Dorsolateral prefrontal cortex (tissue), 120 donors: ENCODE measurements at regions of chr19 and their contacts with region 1.

Region 1: GRCh38 chr19:47745010-47745901 is at the start of gene NOP53:
- DNase-seq: peak; percentile 89 to 97 (median 95)
- H3K4me3 ChIP-seq: peak within 1 kb of the TSS; percentile 64 to 99 (median 85)
- H3K27ac ChIP-seq: peak within 1 kb of the TSS; percentile 81 to 100 (median 98)
- H3K27me3 ChIP-seq: no peaks in the 10 kb centered on the region
- CTCF ChIP-seq: peak in 45 of 56 donors; percentile 6 to 64 (median 38)
- total RNA-seq, gene NOP53: 84.8 to 189 (median 120) TPM

Region 2: DNA sequence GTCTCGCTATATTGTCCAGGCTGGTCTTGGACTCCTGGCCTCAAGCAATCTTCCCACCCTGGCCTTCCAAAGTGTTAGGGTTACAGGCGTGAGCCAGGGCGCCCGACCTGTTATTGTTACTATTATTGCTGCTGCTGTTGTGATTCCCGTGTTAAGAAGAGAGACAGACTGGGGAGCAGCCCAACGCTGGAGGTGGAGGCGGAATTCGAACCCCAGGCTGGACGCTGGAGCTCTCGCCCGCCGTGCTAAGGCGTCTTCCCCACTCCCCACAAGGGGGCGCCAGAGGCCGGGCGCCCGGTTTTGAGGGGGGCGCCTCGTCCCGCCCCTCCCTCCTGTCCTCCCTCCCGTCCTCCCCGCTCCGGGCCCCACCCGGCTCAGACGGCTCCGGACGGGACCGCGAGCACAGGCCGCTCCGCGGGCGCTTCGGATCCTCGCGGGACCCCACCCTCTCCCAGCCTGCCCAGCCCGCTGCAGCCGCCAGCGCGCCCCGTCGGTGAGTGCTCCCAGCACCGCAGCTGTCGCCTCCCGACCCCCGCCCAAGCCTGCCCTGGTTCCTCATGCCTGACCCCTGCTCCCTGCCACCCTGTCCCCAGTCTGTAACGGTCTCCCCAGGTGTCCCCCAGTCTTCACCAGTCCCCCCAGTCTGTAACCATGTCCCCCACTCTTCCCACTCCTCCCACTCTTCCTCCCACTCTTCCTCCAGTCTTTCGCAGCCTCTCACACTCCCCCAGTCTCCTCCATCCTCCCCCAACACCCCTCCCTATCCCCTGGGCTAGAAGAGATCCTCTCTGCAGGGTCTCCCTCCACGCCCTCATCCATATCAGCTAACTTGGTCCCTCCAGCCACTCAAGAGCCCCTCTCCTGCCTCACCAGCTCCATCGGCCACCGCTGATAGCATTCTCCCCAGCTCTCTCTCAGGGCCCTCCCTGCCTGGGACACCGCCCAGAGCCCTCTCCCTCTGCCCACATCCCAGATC is 31.9 kb before region 1 on chr19 and contains the start of gene EHD2:
- intact Hi-C with region 1: loop called (anchors 1 to 5 kb)
- DNase-seq: peak in 2 of 10 donors; percentile 30 to 66
- H3K4me3 ChIP-seq: peak within 1 kb of the TSS; percentile 19 to 69 (median 55)
- H3K27ac ChIP-seq: peak within 1 kb of the TSS in 43 of 59 donors; percentile 22 to 85 (median 62)
- H3K27me3 ChIP-seq: peaks cover 0 to 10% (median 0%) of the 10 kb centered on the region in 45 donors
- CTCF ChIP-seq: peak; percentile 63 to 98 (median 94)
- total RNA-seq, gene EHD2: 12.2 to 45.9 (median 22.6) TPM